Esophagus muscularis mucosa (tissue), 4 donors: ENCODE measurements at regions of chr2 and their contacts with region 1.

Region 1: DNA sequence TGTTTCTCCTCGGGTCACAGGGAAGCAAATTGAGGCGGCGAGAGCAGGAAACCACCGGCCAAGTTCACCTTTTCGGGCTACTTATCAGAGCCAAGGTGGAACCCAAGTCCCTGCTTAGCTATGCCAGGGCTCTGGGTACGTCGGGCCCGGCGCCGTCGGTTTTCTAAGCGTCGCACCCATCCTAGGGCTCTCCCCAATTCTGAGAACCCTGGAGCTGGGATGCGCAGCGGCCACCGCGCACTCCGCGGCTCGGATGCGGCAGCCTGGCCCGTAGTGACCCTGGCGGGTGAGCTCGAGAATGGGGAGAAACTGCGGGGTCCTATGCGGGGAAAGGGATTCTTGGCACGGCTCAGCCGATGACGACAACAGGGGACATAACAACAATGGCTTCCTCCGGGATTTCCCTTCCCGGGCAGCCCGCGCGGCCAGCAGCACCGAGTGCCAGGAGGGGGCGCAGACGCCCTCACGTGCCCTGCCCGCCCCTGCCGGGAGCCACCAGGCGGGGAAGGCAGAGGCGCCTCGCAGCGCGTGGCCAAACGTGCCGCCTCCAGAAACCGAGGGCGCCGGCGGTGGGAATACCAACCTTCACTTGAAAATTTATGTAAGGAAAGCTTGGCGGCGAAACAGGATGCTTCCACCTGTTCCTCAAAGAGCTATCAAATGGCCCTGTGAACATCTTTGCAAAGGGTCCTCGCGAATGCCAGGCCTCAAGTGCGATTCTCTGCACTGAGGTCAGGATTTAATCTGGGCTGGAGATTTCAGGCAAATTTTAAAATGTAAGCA is 2.1 kb upstream of the SLC30A3 start:
- DNase-seq: no peak
- H3K4me3 ChIP-seq: peak overlapping the region; percentile 30 to 56 (median 52)
- H3K27ac ChIP-seq: no peak overlapping the region
- H3K4me1 ChIP-seq: peaks cover 35 to 40% (median 40%) of the 10 kb centered on the region in 4 donors
- H3K27me3 ChIP-seq: peaks cover 0 to 93% (median 58%) of the 10 kb centered on the region in 4 donors
- CTCF ChIP-seq: peak; percentile 36 to 51 (median 40)
- EP300 ChIP-seq: no peak
- POLR2A ChIP-seq: no peak

Region 2: GRCh38 chr2:26442707-26443106 is 822.2 kb before region 1 on chr2:
- intact Hi-C with region 1: loop called (anchors 10 kb)
- DNase-seq: peak; percentile 77
- H3K4me3 ChIP-seq: no peak overlapping the region
- H3K27ac ChIP-seq: no peak overlapping the region
- H3K4me1 ChIP-seq: no peaks in the 10 kb centered on the region
- H3K27me3 ChIP-seq: no peaks in the 10 kb centered on the region
- CTCF ChIP-seq: no peak
- EP300 ChIP-seq: no peak
- POLR2A ChIP-seq: no peak

Region 3: GRCh38 chr2:27233341-27233740 is 31.6 kb before region 1 on chr2:
- intact Hi-C with region 1: no loop called
- DNase-seq: no peak
- H3K4me3 ChIP-seq: no peak overlapping the region
- H3K27ac ChIP-seq: no peak overlapping the region
- H3K4me1 ChIP-seq: no peaks in the 10 kb centered on the region
- H3K27me3 ChIP-seq: no peaks in the 10 kb centered on the region
- CTCF ChIP-seq: no peak
- EP300 ChIP-seq: no peak
- POLR2A ChIP-seq: no peak